ENCODE measurements at regions of chr11 and their contacts with region 1.

Region 1: DNA sequence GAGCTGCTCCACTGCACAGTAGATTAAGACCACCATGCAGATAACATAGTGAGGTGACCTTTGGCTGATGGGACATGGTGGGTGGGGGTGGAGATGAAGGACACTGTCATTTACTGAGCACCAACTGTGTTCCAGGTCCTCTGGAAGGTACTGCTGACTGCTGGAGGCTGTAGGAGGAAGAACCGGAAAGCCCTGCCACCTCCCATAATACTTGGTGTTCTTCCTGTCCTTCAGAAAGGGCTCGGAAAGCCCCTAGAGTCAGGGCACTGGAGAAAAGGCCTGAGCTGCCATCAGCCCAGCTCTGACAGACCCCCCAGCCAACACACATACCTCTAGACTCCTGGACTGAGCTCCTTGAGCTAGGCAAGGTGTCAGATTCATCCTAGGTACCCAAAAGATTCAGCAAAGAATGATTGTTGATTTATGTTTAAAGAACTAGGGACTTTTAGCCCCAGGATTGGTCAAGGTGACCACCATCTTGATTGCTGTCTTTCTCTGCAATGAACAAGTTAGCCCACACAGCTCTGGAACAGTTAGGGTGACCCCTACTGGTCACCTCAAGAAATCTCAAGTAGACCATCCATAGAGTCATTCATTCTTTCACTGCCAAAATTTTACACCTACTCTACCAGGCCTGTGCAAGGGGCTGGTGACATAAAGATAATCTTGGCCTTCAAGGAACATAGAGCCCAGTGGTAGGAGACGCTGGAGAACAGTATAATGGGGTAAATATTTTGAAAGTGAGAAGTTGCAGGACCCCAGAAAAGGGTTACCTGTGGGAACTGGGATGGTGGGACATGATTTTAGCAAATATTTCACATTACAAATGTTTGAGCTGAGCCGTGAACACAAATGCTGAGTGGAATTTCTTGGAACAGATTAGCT is 39.4 kb downstream of the IRAG1 start:
- DNase-seq: peak in 1 of 4 donors; percentile 48
- ATAC-seq: peak; percentile 76
- H3K4me3 ChIP-seq: no peak overlapping the region
- H3K27ac ChIP-seq: peak overlapping the region in 1 of 2 donors; percentile 72
- H3K4me1 ChIP-seq: peaks cover 47 to 74% of the 10 kb centered on the region in 2 donors
- H3K27me3 ChIP-seq: no peaks in the 10 kb centered on the region
- CTCF ChIP-seq: peak; percentile 57 to 70

Region 2: DNA sequence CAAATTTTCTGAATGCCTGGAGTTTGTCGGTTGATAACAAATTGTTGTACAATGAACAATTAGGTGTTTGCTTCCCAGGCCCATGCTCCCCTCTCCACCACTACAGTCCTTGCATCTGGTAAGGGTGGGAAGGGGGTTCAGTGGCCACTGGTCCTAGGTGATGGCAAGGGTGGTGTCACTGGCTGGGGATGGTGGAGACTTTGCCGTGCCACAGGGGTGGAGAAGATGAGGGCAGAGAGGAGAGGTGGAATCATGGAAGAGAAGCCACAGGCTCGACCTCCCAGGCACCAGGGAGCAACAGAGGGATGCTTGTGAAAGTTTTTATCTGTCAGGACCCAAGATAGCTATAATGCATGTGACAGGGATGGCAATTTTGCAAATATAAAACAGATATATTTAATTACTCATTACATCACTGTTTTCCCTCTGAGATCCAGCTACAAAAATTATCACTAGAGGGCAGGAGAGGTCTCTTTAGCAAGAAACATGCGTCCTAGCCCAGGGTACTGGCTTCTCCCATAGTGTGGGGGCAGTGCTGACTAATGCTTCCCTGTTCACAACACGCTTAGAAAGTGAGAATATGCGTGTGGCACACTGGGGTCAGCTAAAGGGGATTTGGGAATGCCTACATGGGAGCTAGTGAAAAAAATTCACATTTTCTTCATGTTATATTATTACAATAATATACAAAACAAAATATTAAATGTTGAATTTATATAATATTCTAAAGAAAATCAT is 248.1 kb before region 1 on chr11:
- intact Hi-C with region 1: loop called in 1 of 2 experiments (anchors 5 kb)
- DNase-seq: peak in 3 of 4 donors; percentile 46 to 78 (median 78)
- ATAC-seq: peak; percentile 97
- H3K4me3 ChIP-seq: no peak overlapping the region
- H3K27ac ChIP-seq: no peak overlapping the region
- H3K4me1 ChIP-seq: peaks cover 0 to 24% of the 10 kb centered on the region in 2 donors
- H3K27me3 ChIP-seq: no peaks in the 10 kb centered on the region
- CTCF ChIP-seq: peak; percentile 75 to 79

Region 3: DNA sequence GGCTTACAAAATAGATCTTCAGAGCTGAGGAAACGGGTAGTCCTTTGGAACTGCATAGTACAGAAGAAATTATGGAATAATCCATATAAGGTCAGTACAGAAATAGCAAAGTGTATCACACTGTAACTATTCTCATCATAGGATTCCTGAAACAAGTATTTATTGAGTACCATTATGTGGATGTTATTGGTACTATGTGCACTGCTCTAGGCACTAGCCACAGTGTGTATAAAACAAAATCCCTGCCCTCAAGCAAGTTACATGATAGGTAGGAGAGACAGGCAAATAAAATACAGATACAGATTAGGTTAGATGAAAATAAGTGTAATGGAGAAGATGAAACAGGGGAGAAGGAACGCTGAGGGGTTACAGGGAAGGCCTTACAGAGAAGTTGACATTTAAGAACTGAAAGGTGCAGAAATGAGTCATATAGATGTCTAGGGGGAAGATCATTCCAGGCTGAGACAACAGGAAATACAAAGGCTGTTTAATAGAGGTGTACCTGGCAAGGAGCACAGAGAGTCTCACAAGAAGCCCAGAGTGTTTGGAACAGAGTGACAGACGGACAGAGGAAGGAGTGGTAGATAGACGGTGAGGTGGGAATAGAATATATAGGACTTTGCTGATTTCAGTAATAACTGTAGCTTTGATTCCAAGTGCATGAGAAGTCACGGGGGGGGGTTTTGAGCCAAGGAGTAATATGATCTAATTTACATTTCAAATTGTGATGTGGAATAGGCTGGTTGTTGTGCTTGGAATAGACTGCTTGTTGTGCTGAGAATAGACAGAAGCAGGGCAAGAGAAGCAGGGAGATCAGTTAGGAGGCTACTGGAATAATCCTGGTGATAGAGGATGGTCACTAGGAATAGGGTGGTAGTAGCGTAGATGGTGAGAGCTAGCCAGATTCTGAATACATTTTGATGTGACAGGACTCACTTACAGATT is 126.9 kb before region 1 on chr11:
- intact Hi-C with region 1: loop called in 1 of 2 experiments (anchors 10 kb)
- DNase-seq: no peak
- ATAC-seq: no peak
- H3K4me3 ChIP-seq: no peak overlapping the region
- H3K27ac ChIP-seq: no peak overlapping the region
- H3K4me1 ChIP-seq: peaks cover 0 to 14% of the 10 kb centered on the region in 2 donors
- H3K27me3 ChIP-seq: no peaks in the 10 kb centered on the region
- CTCF ChIP-seq: no peak

Region 4: GRCh38 chr11:10581481-10582019 is 72.6 kb before region 1 on chr11:
- intact Hi-C with region 1: loop called in 1 of 2 experiments (anchors 10 kb)
- DNase-seq: peak in 2 of 4 donors; percentile 74 to 84
- ATAC-seq: peak; percentile 45
- H3K4me3 ChIP-seq: no peak overlapping the region
- H3K27ac ChIP-seq: peak overlapping the region; percentile 62 to 93
- H3K4me1 ChIP-seq: peaks cover 24 to 67% of the 10 kb centered on the region in 2 donors
- H3K27me3 ChIP-seq: no peaks in the 10 kb centered on the region
- CTCF ChIP-seq: peak in 1 of 2 donors; percentile 18